ENCODE measurements at regions of chr5 and their contacts with region 1.

Region 1: GRCh38 chr5:16508730-16509531 is 43.3 kb upstream of the ZNF622 start:
- DNase-seq: peak; percentile 81
- H3K4me3 Mint-ChIP-seq: peak overlapping the region; percentile 75
- H3K27ac Mint-ChIP-seq: peak overlapping the region; percentile 97
- H3K4me1 Mint-ChIP-seq: peaks cover 30% of the 10 kb centered on the region
- H3K27me3 Mint-ChIP-seq: no peaks in the 10 kb centered on the region
- CTCF ChIP-seq: no peak

Region 2: GRCh38 chr5:16265141-16265540 is 243.8 kb before region 1 on chr5:
- CTCF ChIA-PET with region 1: no interaction called
- POLR2A ChIA-PET with region 1: no interaction called
- intact Hi-C with region 1: no loop called
- DNase-seq: no peak
- H3K4me3 Mint-ChIP-seq: no peak overlapping the region
- H3K27ac Mint-ChIP-seq: no peak overlapping the region
- H3K4me1 Mint-ChIP-seq: peaks cover 7% of the 10 kb centered on the region
- H3K27me3 Mint-ChIP-seq: peaks cover 42% of the 10 kb centered on the region
- CTCF ChIP-seq: no peak

Region 3: DNA sequence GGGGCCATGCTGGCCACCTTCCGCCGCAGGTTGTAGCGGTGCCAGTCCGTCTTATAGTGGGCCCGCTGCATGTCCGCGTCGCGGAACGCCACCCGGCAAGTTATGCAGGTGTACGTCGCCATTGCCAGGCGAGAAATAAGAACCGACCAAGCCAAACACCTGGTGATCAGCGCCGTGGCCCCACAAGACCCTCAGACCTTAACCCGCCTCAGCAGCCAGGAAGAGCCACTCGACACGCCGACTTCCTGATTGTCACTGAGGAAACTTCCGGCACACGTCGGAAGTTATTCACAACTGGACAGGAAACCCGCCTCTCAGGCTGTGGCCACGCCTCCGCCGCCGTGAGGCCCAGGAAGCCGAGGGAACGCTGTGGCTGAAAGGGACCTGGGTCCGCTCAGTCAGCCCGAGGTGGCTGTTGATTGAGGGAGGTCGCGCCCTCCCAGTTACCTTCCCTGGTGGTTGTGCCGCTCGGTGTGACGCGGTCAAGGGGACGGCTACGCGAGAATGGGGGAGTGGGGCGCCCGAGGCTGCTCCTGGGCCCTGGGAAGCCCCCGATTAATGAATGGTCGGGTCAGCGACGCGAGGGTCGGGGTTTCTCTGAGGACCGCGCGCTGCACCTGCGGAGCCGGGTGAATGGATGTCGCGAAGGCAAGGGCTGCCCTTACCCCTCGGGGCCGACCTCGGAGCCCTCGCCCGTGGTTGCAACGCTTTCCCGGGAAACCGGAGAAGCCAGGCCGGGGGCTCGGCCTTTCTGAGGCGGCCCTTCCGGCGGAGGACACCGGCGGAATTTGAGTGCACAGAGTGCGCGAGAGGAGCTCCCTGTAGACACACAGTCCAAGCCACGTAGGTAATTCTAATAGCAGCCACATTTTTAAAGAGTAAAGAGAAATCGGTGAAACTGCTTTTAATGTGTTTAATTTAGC is 43.1 kb before region 1 on chr5 and contains the start of gene ZNF622:
- CTCF ChIA-PET with region 1: no interaction called
- POLR2A ChIA-PET with region 1: interaction called, 10 read pairs
- intact Hi-C with region 1: no loop called
- DNase-seq: peak; percentile 94
- H3K4me3 Mint-ChIP-seq: peak within 1 kb of the TSS; percentile 98
- H3K27ac Mint-ChIP-seq: peak within 1 kb of the TSS; percentile 98
- H3K4me1 Mint-ChIP-seq: peaks cover 53% of the 10 kb centered on the region
- H3K27me3 Mint-ChIP-seq: no peaks in the 10 kb centered on the region
- CTCF ChIP-seq: no peak
- total RNA-seq, gene ZNF622: 34.0 and 34.1 TPM in 2 replicates

Region 4: GRCh38 chr5:16480821-16481538 is 28.0 kb before region 1 on chr5:
- CTCF ChIA-PET with region 1: interaction called, 12 read pairs
- POLR2A ChIA-PET with region 1: interaction called, 4 read pairs
- intact Hi-C with region 1: no loop called
- DNase-seq: no peak
- H3K4me3 Mint-ChIP-seq: no peak overlapping the region
- H3K27ac Mint-ChIP-seq: no peak overlapping the region
- H3K4me1 Mint-ChIP-seq: peaks cover 12% of the 10 kb centered on the region
- H3K27me3 Mint-ChIP-seq: no peaks in the 10 kb centered on the region
- CTCF ChIP-seq: no peak

Region 5: DNA sequence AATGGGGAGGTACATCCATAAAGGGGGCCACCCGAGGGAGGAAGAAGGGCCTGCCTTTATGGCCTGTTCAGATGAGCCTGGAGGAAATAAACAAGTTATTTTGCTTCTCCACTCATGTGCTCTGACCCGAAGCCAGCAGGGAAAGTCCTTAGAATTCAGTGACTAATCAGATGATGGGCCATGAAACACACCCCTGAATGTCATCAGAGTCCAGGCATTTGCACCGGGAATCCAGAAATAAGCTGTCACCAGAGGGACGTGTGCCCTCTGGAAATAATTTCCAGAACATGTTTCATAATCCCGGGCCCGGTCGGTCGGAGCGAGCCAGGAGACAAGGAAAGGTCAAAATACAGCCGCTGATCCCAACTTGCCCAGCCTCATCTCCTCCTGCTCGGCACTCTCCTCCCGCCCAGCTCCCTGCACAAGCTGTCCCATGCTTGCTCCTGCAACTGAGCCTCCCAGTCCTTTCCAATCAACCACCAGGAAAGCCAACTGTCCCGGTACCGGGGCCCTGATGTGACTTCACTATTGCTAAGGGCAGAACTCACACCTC is 30.3 kb after region 1 on chr5:
- CTCF ChIA-PET with region 1: interaction called, 6 read pairs
- POLR2A ChIA-PET with region 1: interaction called, 24 read pairs
- intact Hi-C with region 1: no loop called
- DNase-seq: peak; percentile 78
- H3K4me3 Mint-ChIP-seq: peak overlapping the region; percentile 28
- H3K27ac Mint-ChIP-seq: peak overlapping the region; percentile 91
- H3K4me1 Mint-ChIP-seq: peaks cover 18% of the 10 kb centered on the region
- H3K27me3 Mint-ChIP-seq: no peaks in the 10 kb centered on the region
- CTCF ChIP-seq: no peak